ENCODE measurements at regions of chr11 and their contacts with region 1.

Region 1: DNA sequence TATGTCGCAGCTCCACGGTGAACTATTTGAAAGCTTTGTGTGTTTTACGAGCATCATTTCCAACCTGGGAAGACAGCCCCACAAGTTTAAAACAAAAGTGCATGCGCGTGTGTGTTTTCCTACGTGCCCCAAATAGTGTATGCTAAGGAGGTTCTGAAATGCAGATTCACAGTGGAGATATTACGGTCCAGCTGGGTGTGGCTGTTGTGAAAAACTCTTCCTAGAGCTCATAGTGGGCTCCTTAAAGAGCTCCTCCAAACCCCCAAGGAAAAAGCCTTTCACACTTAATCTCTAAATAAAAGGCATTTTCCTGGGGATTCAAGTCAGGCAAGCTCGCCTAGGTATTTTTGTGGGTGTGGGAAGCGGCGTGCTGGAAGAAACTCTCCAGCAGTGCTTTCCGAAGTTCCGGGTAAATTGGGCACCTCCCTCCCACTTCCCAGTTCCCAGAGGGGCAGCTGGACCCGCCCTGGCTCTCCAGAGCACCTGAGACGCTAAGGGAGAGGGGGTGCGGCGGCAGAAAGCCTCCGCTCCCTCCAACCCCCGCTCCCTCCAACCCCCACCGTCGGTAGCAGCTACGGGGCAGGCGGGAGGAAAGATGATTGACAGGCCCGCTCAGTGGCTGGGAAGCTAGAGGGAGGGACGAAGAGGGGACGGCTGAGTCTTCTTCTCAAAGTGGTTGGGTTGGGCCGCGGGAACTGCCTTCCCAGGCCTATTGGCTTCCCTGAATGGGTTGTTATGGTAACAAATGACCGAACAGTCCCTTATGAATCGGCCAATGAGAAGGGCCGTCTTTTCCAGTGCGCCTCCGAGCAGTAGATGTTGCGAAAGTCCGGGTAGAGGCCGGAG is 558 bp upstream of the PCF11 start:
- DNase-seq: no peak
- H3K4me3 ChIP-seq: peak overlapping the region; percentile 76
- H3K27ac ChIP-seq: peak overlapping the region; percentile 84
- H3K27me3 ChIP-seq: no peaks in the 10 kb centered on the region
- CTCF ChIP-seq: no peak

Region 2: GRCh38 chr11:82900277-82901164 is 255.9 kb before region 1 on chr11 and contains the start of gene PRCP:
- in situ Hi-C with region 1: loop called (anchors 25 kb)
- DNase-seq: peak; percentile 91
- H3K4me3 ChIP-seq: peak within 1 kb of the TSS; percentile 84
- H3K27ac ChIP-seq: peak within 1 kb of the TSS; percentile 85
- H3K27me3 ChIP-seq: no peaks in the 10 kb centered on the region
- CTCF ChIP-seq: peak; percentile 15

Region 3: GRCh38 chr11:82969811-82970210 is 186.6 kb before region 1 on chr11:
- in situ Hi-C with region 1: no loop called
- DNase-seq: no peak
- H3K4me3 ChIP-seq: no peak overlapping the region
- H3K27ac ChIP-seq: no peak overlapping the region
- H3K27me3 ChIP-seq: no peaks in the 10 kb centered on the region
- CTCF ChIP-seq: no peak

Region 4: GRCh38 chr11:83071567-83072349 is 84.6 kb before region 1 on chr11 and contains the start of gene RAB30:
- in situ Hi-C with region 1: loop called (anchors 25 kb)
- DNase-seq: peak; percentile 100
- H3K4me3 ChIP-seq: peak within 1 kb of the TSS; percentile 98
- H3K27ac ChIP-seq: peak within 1 kb of the TSS; percentile 95
- H3K27me3 ChIP-seq: no peaks in the 10 kb centered on the region
- CTCF ChIP-seq: peak; percentile 4

Measured in brain microvascular endothelial cell (primary cell).